ENCODE measurements at regions of chr4 and their contacts with region 1.

Region 1: DNA sequence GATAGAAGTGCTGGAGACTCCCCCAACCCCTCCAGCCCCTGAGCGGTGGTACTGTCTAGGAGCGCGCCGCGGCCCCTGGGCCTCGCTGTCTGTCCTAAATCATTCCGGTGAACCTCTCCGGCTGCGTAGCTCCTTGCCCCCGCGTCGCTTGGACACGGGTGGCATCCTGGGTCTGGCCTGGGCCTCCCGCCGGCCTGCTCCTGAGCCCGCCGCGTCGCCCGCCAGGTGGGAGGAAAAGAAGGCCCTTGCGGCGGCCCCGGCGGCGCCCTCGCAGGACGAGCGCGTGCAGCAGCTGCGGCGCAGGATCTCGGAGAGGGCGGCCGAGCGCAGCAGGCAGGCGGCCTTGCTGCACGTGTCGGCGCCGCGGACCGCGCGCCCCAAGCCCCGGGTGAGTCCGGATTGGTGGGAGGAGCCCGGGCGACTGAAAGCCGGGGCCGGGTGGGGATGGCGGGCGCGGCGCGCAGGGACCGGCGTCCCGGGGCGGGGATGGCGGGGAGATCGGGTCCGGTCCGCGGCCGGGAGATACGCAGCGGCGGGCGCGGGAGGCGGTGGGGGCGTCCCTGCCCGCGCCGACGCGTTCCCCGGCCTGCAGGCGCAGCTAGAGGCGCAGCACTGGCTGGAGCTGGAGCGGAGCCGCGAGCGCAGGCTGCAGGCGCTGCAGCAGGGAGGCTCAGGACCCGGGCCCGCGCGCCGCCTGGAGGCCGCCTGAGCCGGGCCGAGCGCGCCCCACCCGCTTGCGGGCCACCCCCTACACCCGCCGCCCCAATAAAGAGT is 6.5 kb upstream of the RNF4 start:
- DNase-seq: peak; percentile 65 to 83 (median 72)
- H3K4me3 ChIP-seq: peak overlapping the region; percentile 38
- H3K27ac ChIP-seq: peak overlapping the region in 1 of 2 donors; percentile 72
- H3K4me1 ChIP-seq: no peaks in the 10 kb centered on the region
- H3K27me3 ChIP-seq: no peaks in the 10 kb centered on the region
- CTCF ChIP-seq: peak; percentile 39 to 60 (median 56)
- EP300 ChIP-seq: no peak
- POLR2A ChIP-seq: no peak

Region 2: DNA sequence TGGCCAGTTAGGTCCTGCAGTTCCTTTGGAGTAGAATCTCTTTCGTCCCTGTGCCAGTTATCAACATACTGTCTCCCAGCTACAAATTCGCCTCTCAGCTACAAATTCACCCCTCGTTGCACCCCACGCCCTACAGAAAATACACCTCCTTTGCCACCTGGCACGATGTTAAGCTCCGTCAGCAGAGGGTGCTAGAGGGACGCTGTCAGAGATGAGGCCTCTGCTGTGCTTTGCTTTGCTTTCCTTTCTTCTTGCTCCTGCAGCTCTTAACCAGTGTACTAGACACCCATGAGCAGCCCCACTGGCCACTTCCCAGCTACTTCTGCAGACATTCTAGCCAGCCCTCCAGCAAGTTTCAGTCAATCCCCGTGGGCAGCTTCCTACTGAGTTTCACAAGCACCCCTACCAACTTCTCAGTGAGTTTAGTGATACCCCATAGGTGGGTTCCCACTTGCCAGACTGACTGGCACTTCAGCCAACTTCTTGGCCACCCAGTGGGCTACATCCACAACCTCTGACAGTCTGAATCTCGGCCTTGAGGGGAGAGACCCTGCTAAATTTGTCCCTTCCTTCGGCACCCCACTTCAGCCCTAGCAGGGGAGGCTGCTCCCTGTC is 242.3 kb before region 1 on chr4:
- intact Hi-C with region 1: loop called in 3 of 4 experiments (anchors 5 to 10 kb)
- DNase-seq: peak; percentile 63 to 79 (median 76)
- H3K4me3 ChIP-seq: no peak overlapping the region
- H3K27ac ChIP-seq: no peak overlapping the region
- H3K4me1 ChIP-seq: no peaks in the 10 kb centered on the region
- H3K27me3 ChIP-seq: no peaks in the 10 kb centered on the region
- CTCF ChIP-seq: peak; percentile 61 to 87 (median 72)
- EP300 ChIP-seq: no peak
- POLR2A ChIP-seq: no peak

Region 3: GRCh38 chr4:2412885-2413716 is 49.3 kb before region 1 on chr4:
- intact Hi-C with region 1: no loop called
- DNase-seq: peak; percentile 41 to 73 (median 53)
- H3K4me3 ChIP-seq: no peak overlapping the region
- H3K27ac ChIP-seq: no peak overlapping the region
- H3K4me1 ChIP-seq: peaks cover 4% of the 10 kb centered on the region
- H3K27me3 ChIP-seq: peaks cover 7% of the 10 kb centered on the region
- CTCF ChIP-seq: no peak
- EP300 ChIP-seq: no peak
- POLR2A ChIP-seq: no peak

Region 4: DNA sequence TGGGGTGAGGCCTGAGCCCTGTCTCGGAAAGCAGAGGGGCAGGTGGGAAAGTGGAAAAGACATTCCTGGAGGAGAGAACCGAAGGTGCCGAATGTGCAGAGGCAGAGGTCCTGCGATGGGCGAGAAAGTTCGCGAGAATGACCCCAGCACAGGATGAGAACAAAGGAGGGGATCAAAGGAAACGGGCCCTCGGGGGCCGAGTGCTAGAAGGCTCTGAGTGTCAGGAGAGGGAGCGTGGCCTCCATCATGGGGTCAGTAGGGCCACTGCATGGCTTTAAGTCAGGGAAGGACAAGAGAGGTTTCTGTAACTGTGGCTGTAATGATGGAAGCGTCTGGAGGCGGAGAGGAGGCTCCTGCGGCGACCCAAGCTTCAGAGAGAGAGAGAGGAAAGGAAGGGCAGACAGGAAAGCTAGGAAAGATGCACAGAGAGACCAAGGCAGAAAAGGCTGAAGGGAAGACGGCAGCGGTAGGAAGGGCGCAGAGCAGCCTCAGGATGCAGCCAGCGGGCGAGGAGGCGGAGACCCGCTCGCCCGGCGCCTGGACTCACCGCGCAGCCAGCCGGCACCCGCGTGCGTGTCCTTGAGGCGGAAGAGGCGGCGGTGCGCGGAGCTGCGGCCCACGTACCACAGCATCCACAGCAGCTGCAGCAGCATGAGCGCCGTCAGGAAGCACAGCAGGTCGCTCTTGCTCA is 1763.7 kb after region 1 on chr4:
- intact Hi-C with region 1: loop called in 1 of 4 experiments (anchors 5 kb)
- DNase-seq: no peak
- H3K4me3 ChIP-seq: no peak overlapping the region
- H3K27ac ChIP-seq: no peak overlapping the region
- H3K4me1 ChIP-seq: no peaks in the 10 kb centered on the region
- H3K27me3 ChIP-seq: no peaks in the 10 kb centered on the region
- CTCF ChIP-seq: no peak
- EP300 ChIP-seq: no peak
- POLR2A ChIP-seq: no peak